ENCODE measurements at regions of chr9 and their contacts with region 1.

Region 1: GRCh38 chr9:115591584-115591984 is 473.6 kb upstream of the TNC start:
- DNase-seq: peak; percentile 26
- CTCF ChIP-seq: peak; percentile 38

Region 2: GRCh38 chr9:115575147-115575546 is 16.4 kb before region 1 on chr9:
- CTCF ChIA-PET with region 1: interaction called, 10 read pairs
- POLR2A ChIA-PET with region 1: no interaction called
- DNase-seq: no peak
- CTCF ChIP-seq: no peak

Region 3: DNA sequence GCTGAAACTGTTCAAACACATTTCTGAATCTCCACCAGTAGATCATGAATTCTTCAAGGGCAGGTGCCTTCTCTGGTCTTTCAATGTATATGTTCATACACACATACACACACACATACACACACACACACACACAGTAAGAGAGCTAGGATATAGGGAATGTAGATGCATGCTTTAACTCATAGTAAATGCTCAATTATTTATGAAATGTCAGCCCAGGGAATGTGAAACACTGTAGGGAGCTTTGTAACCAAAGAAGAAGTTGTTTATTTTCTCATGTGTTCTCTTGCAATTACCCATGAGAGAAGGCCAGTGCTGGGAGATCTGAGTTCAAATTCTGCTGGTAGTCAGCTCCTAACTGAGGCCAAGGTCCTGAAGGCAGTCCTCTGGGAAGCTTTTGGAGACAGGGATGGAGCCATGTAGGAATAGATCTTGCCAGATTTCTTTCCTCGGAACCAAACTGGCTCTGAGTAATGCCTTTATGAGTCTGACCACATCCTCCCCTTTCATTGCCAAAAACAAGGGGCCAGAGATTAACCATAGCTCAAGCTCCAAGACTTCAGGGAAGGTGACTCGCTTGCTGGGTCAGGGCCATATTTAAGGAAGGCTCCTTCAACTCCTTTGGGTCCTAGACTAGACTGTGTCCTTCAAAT is 13.4 kb after region 1 on chr9:
- CTCF ChIA-PET with region 1: interaction called, 38 read pairs
- POLR2A ChIA-PET with region 1: no interaction called
- DNase-seq: no peak
- CTCF ChIP-seq: no peak

Region 4: GRCh38 chr9:116572095-116572748 is 980.6 kb after region 1 on chr9:
- CTCF ChIA-PET with region 1: interaction called, 16 read pairs
- POLR2A ChIA-PET with region 1: no interaction called
- DNase-seq: peak; percentile 74
- CTCF ChIP-seq: peak; percentile 77

Region 5: GRCh38 chr9:116646661-116647512 is 1055.3 kb after region 1 on chr9:
- CTCF ChIA-PET with region 1: interaction called, 27 read pairs
- POLR2A ChIA-PET with region 1: no interaction called
- DNase-seq: no peak
- CTCF ChIP-seq: peak; percentile 66

Region 6: DNA sequence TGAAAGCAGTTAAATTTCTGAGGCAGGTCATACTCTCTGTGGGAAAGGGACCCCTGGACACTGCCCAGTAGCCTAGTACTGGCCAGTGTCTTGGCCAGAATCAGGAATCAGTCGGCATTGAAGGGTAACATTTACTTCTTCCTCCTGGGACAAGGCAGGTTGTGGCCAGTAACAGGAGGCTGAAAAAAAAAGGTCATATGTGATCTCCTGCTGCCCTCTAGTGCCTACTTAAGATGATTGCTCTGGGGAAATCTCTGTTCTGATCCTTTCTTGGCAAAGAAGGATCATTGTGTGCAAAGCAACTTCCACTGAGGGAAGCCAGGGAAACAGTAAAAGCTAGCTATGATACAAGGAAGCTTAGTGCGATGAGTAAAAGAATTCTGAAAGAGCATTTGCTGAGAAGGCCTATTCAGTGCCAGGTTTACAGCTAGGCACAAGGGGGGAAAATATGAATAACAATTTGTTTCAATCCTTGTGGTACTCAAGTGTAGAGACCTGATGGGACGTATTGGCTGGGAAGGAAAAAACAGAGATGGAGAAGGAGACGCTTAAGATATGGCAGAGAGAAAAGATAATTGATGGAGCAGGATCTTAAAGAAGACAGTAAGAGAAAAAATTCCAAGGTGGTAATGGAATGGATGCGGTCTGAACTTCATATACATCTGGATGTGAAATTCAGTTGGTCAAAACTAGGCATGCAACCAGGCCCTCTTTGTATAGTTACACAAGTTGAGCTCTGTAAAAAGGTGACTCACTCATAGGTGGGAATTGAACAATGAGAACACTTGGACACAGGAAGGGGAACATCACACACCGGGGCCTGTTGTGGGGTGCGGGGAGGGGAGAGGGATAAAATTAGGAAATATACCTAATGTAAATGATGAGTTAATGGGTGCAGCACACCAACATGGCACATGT is 1069.7 kb after region 1 on chr9:
- CTCF ChIA-PET with region 1: interaction called, 17 read pairs
- POLR2A ChIA-PET with region 1: no interaction called
- DNase-seq: peak; percentile 49
- CTCF ChIP-seq: peak; percentile 69